ENCODE measurements at regions of chr12 and their contacts with region 1.

Region 1: DNA sequence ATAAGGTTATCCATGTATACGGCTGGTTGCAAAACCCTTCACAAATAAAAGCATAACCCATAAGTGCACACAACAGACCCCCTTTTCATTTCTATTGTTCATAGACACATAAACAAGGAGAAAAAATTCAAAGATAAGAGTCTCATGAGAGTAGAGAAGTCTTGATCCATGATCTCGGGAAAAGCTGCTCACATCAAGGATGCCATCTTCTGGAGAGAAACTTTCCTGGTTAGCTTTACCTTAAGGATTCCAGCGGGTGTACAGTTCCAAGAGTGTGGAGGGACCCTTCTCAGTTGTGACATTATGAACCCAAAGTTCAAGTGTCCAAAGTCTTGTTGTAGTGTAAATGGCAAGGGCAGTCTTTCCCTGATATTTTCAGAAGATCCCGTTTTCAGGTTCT is 144.5 kb downstream of the LLPH start:
- DNase-seq: no peak
- ATAC-seq: no peak
- H3K4me3 ChIP-seq: no peak overlapping the region
- H3K4me3 Mint-ChIP-seq: no peak overlapping the region
- H3K27ac ChIP-seq: no peak overlapping the region
- H3K27ac Mint-ChIP-seq: no peak overlapping the region
- H3K4me1 ChIP-seq: no peaks in the 10 kb centered on the region
- H3K4me1 Mint-ChIP-seq: no peaks in the 10 kb centered on the region
- H3K27me3 ChIP-seq: no peaks in the 10 kb centered on the region
- H3K27me3 Mint-ChIP-seq: peaks cover 0 to 14% (median 0%) of the 10 kb centered on the region in 5 donors

Region 2: GRCh38 chr12:65306366-65307168 is 679.5 kb before region 1 on chr12:
- CTCF ChIA-PET with region 1: no interaction called
- POLR2A ChIA-PET with region 1: no interaction called
- intact Hi-C with region 1: loop called (anchors 5 to 10 kb)
- DNase-seq: no peak
- ATAC-seq: peak; percentile 32
- H3K4me3 ChIP-seq: no peak overlapping the region
- H3K4me3 Mint-ChIP-seq: no peak overlapping the region
- H3K27ac ChIP-seq: no peak overlapping the region
- H3K27ac Mint-ChIP-seq: no peak overlapping the region
- H3K4me1 ChIP-seq: no peaks in the 10 kb centered on the region
- H3K4me1 Mint-ChIP-seq: peaks cover 0 to 18% (median 9%) of the 10 kb centered on the region in 7 donors
- H3K27me3 ChIP-seq: no peaks in the 10 kb centered on the region
- H3K27me3 Mint-ChIP-seq: peaks cover 20 to 31% (median 23%) of the 10 kb centered on the region in 5 donors

Region 3: DNA sequence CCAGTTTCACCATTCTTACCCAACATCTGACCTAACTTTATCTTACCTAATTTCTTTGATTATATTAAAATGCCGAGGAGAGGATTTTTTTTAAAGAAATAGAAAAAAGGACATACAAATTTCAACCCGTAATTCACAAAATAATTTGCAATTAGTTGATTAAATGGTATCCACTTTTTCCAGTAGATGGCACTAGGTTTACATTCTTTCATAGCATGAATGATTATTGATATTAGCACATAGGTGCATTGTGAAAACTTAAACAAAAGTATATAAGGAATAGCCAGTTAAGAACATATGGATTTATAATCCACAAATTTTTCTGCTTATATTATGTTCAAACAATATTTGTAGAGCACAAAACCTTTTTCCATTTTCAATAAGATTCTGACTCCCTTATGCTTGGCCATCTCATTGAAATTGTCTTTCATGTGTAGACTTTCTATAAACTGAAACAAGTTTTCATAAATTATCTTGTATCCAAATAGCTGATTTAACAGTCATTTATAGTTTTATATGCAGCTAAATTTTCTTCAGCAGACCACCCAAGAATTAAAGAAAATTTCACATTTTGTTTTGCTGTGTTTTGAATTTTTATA is 672.2 kb before region 1 on chr12:
- CTCF ChIA-PET with region 1: no interaction called
- POLR2A ChIA-PET with region 1: no interaction called
- intact Hi-C with region 1: loop called (anchors 5 to 10 kb)
- DNase-seq: no peak
- ATAC-seq: no peak
- H3K4me3 ChIP-seq: no peak overlapping the region
- H3K4me3 Mint-ChIP-seq: no peak overlapping the region
- H3K27ac ChIP-seq: no peak overlapping the region
- H3K27ac Mint-ChIP-seq: no peak overlapping the region
- H3K4me1 ChIP-seq: no peaks in the 10 kb centered on the region
- H3K4me1 Mint-ChIP-seq: peaks cover 0 to under 1% (median 0%) of the 10 kb centered on the region in 7 donors
- H3K27me3 ChIP-seq: no peaks in the 10 kb centered on the region
- H3K27me3 Mint-ChIP-seq: peaks cover 0 to 16% (median 8%) of the 10 kb centered on the region in 5 donors

Region 4: DNA sequence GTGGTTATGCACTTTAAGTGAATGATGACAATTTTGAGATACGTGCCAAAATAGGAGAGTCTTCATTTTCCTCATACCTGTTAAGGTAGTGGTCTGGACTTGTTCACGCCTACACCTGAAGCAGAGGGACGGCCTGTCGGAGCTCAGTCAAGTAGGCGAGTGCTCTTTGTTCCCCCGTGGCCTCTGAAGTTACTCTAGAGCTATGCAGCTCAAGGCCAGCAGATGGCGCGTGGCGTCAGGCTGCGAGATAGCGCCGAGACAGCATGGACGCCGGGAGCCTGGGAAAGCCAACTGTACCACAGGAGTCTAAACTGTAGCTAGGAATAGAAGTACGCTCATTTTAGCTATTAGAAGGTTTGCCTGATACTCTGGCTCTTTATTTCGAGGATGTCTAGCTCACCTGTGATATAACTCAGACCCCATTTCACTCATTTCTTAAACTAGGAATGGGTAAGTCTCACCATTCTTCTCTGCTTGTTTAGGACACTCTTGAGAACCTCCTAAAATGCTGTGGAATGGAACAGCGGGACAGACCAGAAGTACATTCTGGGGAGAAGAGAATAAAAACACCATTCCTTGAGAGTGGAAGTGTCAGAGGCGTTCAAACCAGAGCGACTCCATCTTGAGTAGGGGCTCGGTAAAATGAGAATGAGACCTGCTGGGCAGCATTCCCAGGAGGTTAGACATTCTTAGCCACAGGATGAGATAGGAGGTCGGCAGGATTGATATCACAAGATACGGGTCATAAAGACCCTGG is 429.2 kb before region 1 on chr12:
- CTCF ChIA-PET with region 1: no interaction called
- POLR2A ChIA-PET with region 1: no interaction called
- intact Hi-C with region 1: loop called (anchors 1 kb)
- DNase-seq: peak; percentile 4 to 59 (median 47)
- ATAC-seq: peak; percentile 86
- H3K4me3 ChIP-seq: no peak overlapping the region
- H3K4me3 Mint-ChIP-seq: no peak overlapping the region
- H3K27ac ChIP-seq: no peak overlapping the region
- H3K27ac Mint-ChIP-seq: no peak overlapping the region
- H3K4me1 ChIP-seq: no peaks in the 10 kb centered on the region
- H3K4me1 Mint-ChIP-seq: peaks cover 0 to 8% (median 6%) of the 10 kb centered on the region in 7 donors
- H3K27me3 ChIP-seq: peaks cover 5% of the 10 kb centered on the region in 2 donors
- H3K27me3 Mint-ChIP-seq: peaks cover 0 to 22% (median 19%) of the 10 kb centered on the region in 5 donors

Region 5: DNA sequence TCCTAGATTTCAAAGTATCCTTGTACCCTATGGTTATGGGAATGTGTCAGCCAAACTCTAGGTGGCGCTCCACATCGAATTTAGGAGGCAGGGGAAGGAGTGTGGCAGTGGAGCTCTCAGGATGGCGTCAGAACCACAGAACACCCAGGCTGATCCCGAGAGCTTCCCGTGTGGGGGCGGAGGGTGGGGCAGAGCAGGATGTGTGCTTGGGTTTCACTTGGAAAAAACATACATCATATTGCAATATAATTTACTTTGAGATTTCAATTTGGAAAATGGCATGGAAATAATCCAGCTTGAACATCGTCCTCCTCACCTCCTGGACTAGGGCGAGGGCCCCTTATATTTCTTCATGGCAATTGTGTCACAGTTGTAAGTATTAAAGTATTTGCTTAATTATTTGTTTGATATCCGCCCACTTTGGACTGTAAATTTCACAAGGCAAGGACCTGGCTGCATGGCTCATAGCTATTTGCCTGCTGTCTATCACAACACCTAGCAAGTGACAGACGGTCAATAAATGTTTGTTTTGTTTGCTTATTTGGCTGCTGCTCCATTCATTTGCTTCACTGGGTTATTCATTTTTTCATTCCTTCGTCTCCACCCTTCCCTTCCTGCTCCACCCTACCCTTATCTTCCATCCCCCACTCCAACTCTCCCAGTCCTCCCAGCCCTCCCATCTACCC is 383.3 kb before region 1 on chr12:
- CTCF ChIA-PET with region 1: no interaction called
- POLR2A ChIA-PET with region 1: no interaction called
- intact Hi-C with region 1: loop called in 1 of 2 experiments (anchors 5 kb)
- DNase-seq: peak in 2 of 9 donors; percentile 14 to 35
- ATAC-seq: peak; percentile 53
- H3K4me3 ChIP-seq: no peak overlapping the region
- H3K4me3 Mint-ChIP-seq: no peak overlapping the region
- H3K27ac ChIP-seq: no peak overlapping the region
- H3K27ac Mint-ChIP-seq: no peak overlapping the region
- H3K4me1 ChIP-seq: no peaks in the 10 kb centered on the region
- H3K4me1 Mint-ChIP-seq: peaks cover 0 to 2% (median 0%) of the 10 kb centered on the region in 7 donors
- H3K27me3 ChIP-seq: no peaks in the 10 kb centered on the region
- H3K27me3 Mint-ChIP-seq: peaks cover 17 to 37% (median 21%) of the 10 kb centered on the region in 5 donors